HepG2 (cell line): ENCODE measurements at regions of chr16 and their contacts with region 1.

Region 1: GRCh38 chr16:71746442-71747046 is 22.0 kb upstream of the PHLPP2 start:
- DNase-seq: peak; percentile 51
- ATAC-seq: no peak
- H3K4me3 ChIP-seq: no peak overlapping the region
- H3K27ac ChIP-seq: no peak overlapping the region
- H3K4me1 ChIP-seq: no peaks in the 10 kb centered on the region
- H3K27me3 ChIP-seq: no peaks in the 10 kb centered on the region
- CTCF ChIP-seq: peak; percentile 73
- EP300 ChIP-seq: no peak
- POLR2A ChIP-seq: no peak
- RAD21 ChIP-seq: peak; percentile 32; the same call in 1 of the 2 replicates

Region 2: GRCh38 chr16:71622088-71622487 is 124.5 kb before region 1 on chr16:
- CTCF ChIA-PET with region 1: no interaction called
- POLR2A ChIA-PET with region 1: no interaction called
- in situ Hi-C with region 1: no loop called
- intact Hi-C with region 1: loop called (anchors 2 kb)
- DNase-seq: no peak
- ATAC-seq: no peak
- H3K4me3 ChIP-seq: no peak overlapping the region
- H3K27ac ChIP-seq: no peak overlapping the region
- H3K4me1 ChIP-seq: peaks cover 33% of the 10 kb centered on the region
- H3K27me3 ChIP-seq: peaks cover 0 to 2% of the 10 kb centered on the region in 2 experiments; a peak in 1 of 5 replicates
- CTCF ChIP-seq: no peak
- EP300 ChIP-seq: no peak
- POLR2A ChIP-seq: no peak
- RAD21 ChIP-seq: no peak

Region 3: GRCh38 chr16:71645453-71645852 is 101.1 kb before region 1 on chr16:
- CTCF ChIA-PET with region 1: no interaction called
- POLR2A ChIA-PET with region 1: no interaction called
- in situ Hi-C with region 1: no loop called
- intact Hi-C with region 1: loop called (anchors 1 kb)
- DNase-seq: peak; percentile 67
- ATAC-seq: peak; percentile 90
- H3K4me3 ChIP-seq: no peak overlapping the region
- H3K27ac ChIP-seq: no peak overlapping the region
- H3K4me1 ChIP-seq: no peaks in the 10 kb centered on the region
- H3K27me3 ChIP-seq: no peaks in the 10 kb centered on the region
- CTCF ChIP-seq: peak; percentile 83
- EP300 ChIP-seq: no peak
- POLR2A ChIP-seq: no peak
- RAD21 ChIP-seq: peak; percentile 78

Region 4: DNA sequence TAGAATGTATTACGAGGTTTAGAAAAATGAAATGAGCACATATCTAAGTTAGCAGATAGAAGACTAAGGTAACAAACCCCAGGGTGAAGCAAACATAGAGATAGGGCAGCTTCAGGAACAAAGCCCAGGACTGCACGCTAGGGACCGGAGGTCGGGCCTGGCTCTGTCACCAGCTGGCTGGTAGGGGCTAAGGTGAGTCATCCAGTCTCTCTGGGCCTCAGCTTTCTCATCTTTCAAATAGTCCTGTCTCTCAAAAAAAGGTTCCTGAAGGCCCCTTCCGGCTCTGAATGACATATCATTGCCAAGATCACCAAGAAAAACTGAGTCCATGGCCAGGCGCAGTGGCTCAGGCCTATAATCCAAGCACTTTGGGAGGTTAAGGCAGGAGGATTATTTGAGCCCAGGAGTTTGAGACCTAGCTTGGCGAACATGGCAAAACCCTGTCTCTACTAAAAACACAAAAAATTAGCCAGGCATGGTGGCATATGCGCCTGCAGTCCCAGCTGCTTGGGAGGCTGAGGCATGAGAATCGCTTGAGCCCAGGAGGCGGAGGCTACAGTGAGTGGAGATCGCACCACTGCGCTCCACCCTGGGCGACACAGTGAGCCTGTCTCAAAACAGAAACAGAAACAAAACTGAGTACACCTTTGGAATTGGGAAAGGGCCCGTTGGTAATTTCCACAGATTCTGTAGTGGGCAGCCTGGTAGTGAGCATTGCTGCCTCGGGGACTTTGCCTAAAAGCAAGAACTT is 227.7 kb after region 1 on chr16:
- CTCF ChIA-PET with region 1: no interaction called
- POLR2A ChIA-PET with region 1: no interaction called
- in situ Hi-C with region 1: no loop called
- intact Hi-C with region 1: no loop called
- DNase-seq: peak; percentile 63
- ATAC-seq: peak; percentile 98
- H3K4me3 ChIP-seq: 0 out of 6 replicates have a peak overlapping the region, but pooled peaks of 1 of the 3 experiments have one; percentile 1
- H3K27ac ChIP-seq: no peak overlapping the region
- H3K4me1 ChIP-seq: peaks cover 32% of the 10 kb centered on the region
- H3K27me3 ChIP-seq: peaks cover 0 to 4% of the 10 kb centered on the region in 2 experiments; a peak in 2 of 5 replicates
- CTCF ChIP-seq: no peak
- EP300 ChIP-seq: no peak
- POLR2A ChIP-seq: no peak
- RAD21 ChIP-seq: no peak